AG04449 (cell line): ENCODE measurements at regions of chr12 and their contacts with region 1.

Region 1: DNA sequence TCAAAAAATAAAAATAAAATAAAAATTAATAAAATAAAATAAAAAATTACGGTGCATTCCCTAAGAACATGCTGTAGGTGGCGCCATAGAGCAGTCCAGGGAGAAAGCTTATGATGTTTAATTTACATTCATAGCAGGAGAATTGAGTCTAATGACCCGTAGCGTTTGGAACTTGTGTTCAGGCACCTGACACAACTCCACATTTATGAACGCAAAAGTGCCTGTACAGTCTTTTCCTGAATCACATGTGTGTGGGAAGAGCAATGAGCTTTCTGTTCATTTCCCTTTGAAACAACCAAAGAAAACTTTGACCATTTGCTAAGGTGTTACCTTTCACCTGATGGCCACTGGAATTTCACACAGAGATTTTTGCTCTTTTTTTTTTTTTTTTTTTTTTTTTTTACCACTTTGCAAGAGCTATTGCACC is 60.6 kb upstream of the KCNA1 start:
- DNase-seq: no peak
- H3K4me3 ChIP-seq: no peak overlapping the region
- CTCF ChIP-seq: peak; percentile 65

Region 2: GRCh38 chr12:4044736-4045730 is 804.1 kb before region 1 on chr12:
- CTCF ChIA-PET with region 1: no interaction called
- POLR2A ChIA-PET with region 1: no interaction called
- DNase-seq: no peak
- H3K4me3 ChIP-seq: no peak overlapping the region
- CTCF ChIP-seq: no peak

Region 3: GRCh38 chr12:4824415-4824814 is 24.7 kb before region 1 on chr12:
- CTCF ChIA-PET with region 1: no interaction called
- POLR2A ChIA-PET with region 1: no interaction called
- DNase-seq: peak; percentile 19
- H3K4me3 ChIP-seq: no peak overlapping the region
- CTCF ChIP-seq: no peak

Region 4: GRCh38 chr12:5003020-5003666 is 154.0 kb after region 1 on chr12:
- CTCF ChIA-PET with region 1: interaction called, 351 read pairs
- POLR2A ChIA-PET with region 1: no interaction called
- DNase-seq: no peak
- H3K4me3 ChIP-seq: no peak overlapping the region
- CTCF ChIP-seq: peak; percentile 97

Region 5: GRCh38 chr12:5013266-5013730 is 164.2 kb after region 1 on chr12:
- CTCF ChIA-PET with region 1: interaction called, 155 read pairs
- POLR2A ChIA-PET with region 1: no interaction called
- DNase-seq: no peak
- H3K4me3 ChIP-seq: no peak overlapping the region
- CTCF ChIP-seq: no peak